T-cell (primary cell): ENCODE measurements at regions of chr17 and their contacts with region 1.

Region 1: GRCh38 chr17:30393911-30394867 is 15.5 kb downstream of the CPD start:
- DNase-seq: no peak
- ATAC-seq: no peak
- H3K4me3 ChIP-seq: no peak overlapping the region
- H3K4me3 Mint-ChIP-seq: no peak overlapping the region
- H3K27ac ChIP-seq: no peak overlapping the region
- H3K27ac Mint-ChIP-seq: no peak overlapping the region
- H3K4me1 ChIP-seq: no peaks in the 10 kb centered on the region
- H3K4me1 Mint-ChIP-seq: peaks cover 16 to 23% (median 22%) of the 10 kb centered on the region in 3 donors
- H3K27me3 ChIP-seq: no peaks in the 10 kb centered on the region
- H3K27me3 Mint-ChIP-seq: no peaks in the 10 kb centered on the region

Region 2: GRCh38 chr17:28854457-28855350 is 1539.5 kb before region 1 on chr17 and contains the start of gene ERAL1:
- CTCF ChIA-PET with region 1: no interaction called
- POLR2A ChIA-PET with region 1: interaction called in 1 of 2 experiments, 11 read pairs
- DNase-seq: peak; percentile 64 to 89 (median 80)
- ATAC-seq: peak; percentile 100
- H3K4me3 ChIP-seq: peak within 1 kb of the TSS; percentile 74 to 89
- H3K4me3 Mint-ChIP-seq: peak within 1 kb of the TSS; percentile 88 to 92 (median 89)
- H3K27ac ChIP-seq: peak within 1 kb of the TSS; percentile 53
- H3K27ac Mint-ChIP-seq: peak within 1 kb of the TSS; percentile 75 to 96
- H3K4me1 ChIP-seq: peaks cover 7 to 14% of the 10 kb centered on the region in 2 experiments
- H3K4me1 Mint-ChIP-seq: peaks cover 8 to 21% (median 16%) of the 10 kb centered on the region in 3 donors
- H3K27me3 ChIP-seq: no peaks in the 10 kb centered on the region
- H3K27me3 Mint-ChIP-seq: no peaks in the 10 kb centered on the region
- total RNA-seq, gene ERAL1: 18.9 to 33.7 (median 29.0) TPM

Region 3: GRCh38 chr17:28946239-28946638 is 1448.0 kb before region 1 on chr17:
- CTCF ChIA-PET with region 1: no interaction called
- POLR2A ChIA-PET with region 1: interaction called in 1 of 2 experiments, 10 read pairs
- DNase-seq: no peak
- ATAC-seq: no peak
- H3K4me3 ChIP-seq: no peak overlapping the region
- H3K4me3 Mint-ChIP-seq: peak overlapping the region in 2 of 3 donors; percentile 58 to 94
- H3K27ac ChIP-seq: no peak overlapping the region
- H3K27ac Mint-ChIP-seq: peak overlapping the region; percentile 91 to 93
- H3K4me1 ChIP-seq: peaks cover 27 to 48% of the 10 kb centered on the region in 2 experiments
- H3K4me1 Mint-ChIP-seq: peaks cover 68 to 75% (median 74%) of the 10 kb centered on the region in 3 donors
- H3K27me3 ChIP-seq: no peaks in the 10 kb centered on the region
- H3K27me3 Mint-ChIP-seq: no peaks in the 10 kb centered on the region

Region 4: GRCh38 chr17:30188211-30188939 is 205.8 kb before region 1 on chr17:
- CTCF ChIA-PET with region 1: interaction called in 1 of 2 experiments, 10 read pairs
- POLR2A ChIA-PET with region 1: no interaction called
- DNase-seq: no peak
- ATAC-seq: no peak
- H3K4me3 ChIP-seq: no peak overlapping the region
- H3K4me3 Mint-ChIP-seq: no peak overlapping the region
- H3K27ac ChIP-seq: no peak overlapping the region
- H3K27ac Mint-ChIP-seq: no peak overlapping the region
- H3K4me1 ChIP-seq: no peaks in the 10 kb centered on the region
- H3K4me1 Mint-ChIP-seq: no peaks in the 10 kb centered on the region
- H3K27me3 ChIP-seq: no peaks in the 10 kb centered on the region
- H3K27me3 Mint-ChIP-seq: peaks cover 0 to 3% of the 10 kb centered on the region in 2 donors

Region 5: GRCh38 chr17:32370426-32370825 is 1976.2 kb after region 1 on chr17:
- CTCF ChIA-PET with region 1: no interaction called
- POLR2A ChIA-PET with region 1: no interaction called
- DNase-seq: no peak
- ATAC-seq: no peak
- H3K4me3 ChIP-seq: no peak overlapping the region
- H3K4me3 Mint-ChIP-seq: no peak overlapping the region
- H3K27ac ChIP-seq: no peak overlapping the region
- H3K27ac Mint-ChIP-seq: no peak overlapping the region
- H3K4me1 ChIP-seq: no peaks in the 10 kb centered on the region
- H3K4me1 Mint-ChIP-seq: peaks cover 31 to 40% (median 34%) of the 10 kb centered on the region in 3 donors
- H3K27me3 ChIP-seq: no peaks in the 10 kb centered on the region
- H3K27me3 Mint-ChIP-seq: no peaks in the 10 kb centered on the region